CD4-positive, alpha-beta memory T cell (primary cell): ENCODE measurements at regions of chr12 and their contacts with region 1.

Region 1: DNA sequence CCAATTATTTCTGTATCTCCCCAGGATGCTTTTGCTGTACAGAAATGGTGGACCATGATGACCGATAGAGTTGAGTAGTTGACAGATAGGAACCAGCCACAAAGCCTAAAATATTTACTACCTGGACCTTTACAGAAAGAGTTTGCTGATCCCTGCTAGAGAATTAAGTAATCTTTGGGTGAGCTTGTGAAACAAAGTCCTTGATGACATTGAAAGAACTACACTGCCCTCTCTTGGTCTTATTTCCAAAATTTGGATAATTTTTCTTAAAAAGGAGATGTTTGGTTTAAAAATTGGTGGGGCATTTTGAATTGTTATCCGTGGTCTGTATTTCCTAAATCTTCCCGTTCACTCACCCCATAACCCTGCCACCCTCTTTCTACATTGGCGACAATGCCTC is 13.7 kb upstream of the TCTN1 start:
- DNase-seq: peak in 4 of 5 donors; percentile 51 to 56 (median 54)
- H3K4me3 ChIP-seq: no peak overlapping the region
- H3K4me3 Mint-ChIP-seq: no peak overlapping the region
- H3K27ac ChIP-seq: no peak overlapping the region
- H3K27ac Mint-ChIP-seq: peak overlapping the region in 3 of 7 donors; percentile 44 to 83 (median 55)
- H3K4me1 ChIP-seq: peaks cover 1% of the 10 kb centered on the region
- H3K4me1 Mint-ChIP-seq: peaks cover 4 to 11% (median 8%) of the 10 kb centered on the region in 4 donors
- H3K27me3 ChIP-seq: no peaks in the 10 kb centered on the region
- H3K27me3 Mint-ChIP-seq: no peaks in the 10 kb centered on the region

Region 2: GRCh38 chr12:110431957-110432587 is 168.2 kb before region 1 on chr12:
- CTCF ChIA-PET with region 1: interaction called, 15 read pairs
- POLR2A ChIA-PET with region 1: no interaction called
- intact Hi-C with region 1: no loop called
- DNase-seq: no peak
- H3K4me3 ChIP-seq: peak overlapping the region in 1 of 2 donors; percentile 43
- H3K4me3 Mint-ChIP-seq: no peak overlapping the region
- H3K27ac ChIP-seq: no peak overlapping the region
- H3K27ac Mint-ChIP-seq: peak overlapping the region in 4 of 7 donors; percentile 18 to 99 (median 55)
- H3K4me1 ChIP-seq: peaks cover 4% of the 10 kb centered on the region
- H3K4me1 Mint-ChIP-seq: peaks cover 2 to 12% (median 3%) of the 10 kb centered on the region in 4 donors
- H3K27me3 ChIP-seq: no peaks in the 10 kb centered on the region
- H3K27me3 Mint-ChIP-seq: no peaks in the 10 kb centered on the region

Region 3: GRCh38 chr12:110501752-110502738 is 98.2 kb before region 1 on chr12 and contains the starts of genes RAD9B and VPS29:
- CTCF ChIA-PET with region 1: interaction called, 16 read pairs
- POLR2A ChIA-PET with region 1: interaction called, 3 read pairs
- intact Hi-C with region 1: no loop called
- DNase-seq: peak; percentile 99 to 100 (median 99)
- H3K4me3 ChIP-seq: peak within 1 kb of the TSS; percentile 85 to 91
- H3K4me3 Mint-ChIP-seq: peak within 1 kb of the TSS; percentile 96 to 99 (median 98)
- H3K27ac ChIP-seq: peak within 1 kb of the TSS; percentile 94
- H3K27ac Mint-ChIP-seq: peak within 1 kb of the TSS; percentile 95 to 99 (median 97)
- H3K4me1 ChIP-seq: peaks cover 35% of the 10 kb centered on the region
- H3K4me1 Mint-ChIP-seq: peaks cover 20 to 44% (median 30%) of the 10 kb centered on the region in 4 donors
- H3K27me3 ChIP-seq: no peaks in the 10 kb centered on the region
- H3K27me3 Mint-ChIP-seq: no peaks in the 10 kb centered on the region
- total RNA-seq, gene RAD9B: 1.1 to 2.1 TPM
- total RNA-seq, gene VPS29: 117 to 121 TPM

Region 4: DNA sequence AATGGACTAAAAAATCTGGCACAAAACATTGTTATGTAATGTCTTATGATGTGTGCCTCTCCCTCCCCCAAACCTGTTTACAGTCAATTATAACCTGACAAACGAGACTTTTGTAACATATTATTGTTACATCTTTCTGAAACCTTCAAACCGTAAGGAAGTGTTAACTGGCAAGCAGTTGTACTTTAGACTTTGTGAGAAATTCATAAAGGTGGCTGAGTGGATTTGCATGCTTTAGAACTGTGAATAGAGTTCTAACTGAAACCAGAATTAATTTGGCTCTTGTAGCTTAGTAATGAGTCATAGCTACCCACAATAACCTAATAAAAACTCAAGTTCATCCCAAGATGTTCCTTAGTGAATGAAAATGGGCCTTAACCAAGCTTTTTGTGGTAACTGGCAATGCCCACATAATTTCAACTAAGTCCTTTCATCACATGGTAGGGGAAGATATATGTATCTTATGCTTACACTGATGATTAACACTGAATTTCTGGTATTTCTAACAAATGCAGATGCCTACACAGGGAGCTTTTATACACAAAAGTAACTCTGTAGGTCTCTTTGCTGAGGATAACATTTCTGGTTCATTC is 68.4 kb before region 1 on chr12:
- CTCF ChIA-PET with region 1: interaction called, 30 read pairs
- POLR2A ChIA-PET with region 1: no interaction called
- intact Hi-C with region 1: no loop called
- DNase-seq: no peak
- H3K4me3 ChIP-seq: no peak overlapping the region
- H3K4me3 Mint-ChIP-seq: no peak overlapping the region
- H3K27ac ChIP-seq: no peak overlapping the region
- H3K27ac Mint-ChIP-seq: peak overlapping the region in 3 of 7 donors; percentile 1 to 28 (median 24)
- H3K4me1 ChIP-seq: no peaks in the 10 kb centered on the region
- H3K4me1 Mint-ChIP-seq: peaks cover 1 to 6% (median 3%) of the 10 kb centered on the region in 4 donors
- H3K27me3 ChIP-seq: no peaks in the 10 kb centered on the region
- H3K27me3 Mint-ChIP-seq: no peaks in the 10 kb centered on the region

Region 5: GRCh38 chr12:110563702-110564640 is 36.3 kb before region 1 on chr12:
- CTCF ChIA-PET with region 1: interaction called, 102 read pairs
- POLR2A ChIA-PET with region 1: no interaction called
- intact Hi-C with region 1: no loop called
- DNase-seq: no peak
- H3K4me3 ChIP-seq: no peak overlapping the region
- H3K4me3 Mint-ChIP-seq: peak overlapping the region in 4 of 8 donors; percentile 7 to 40 (median 27)
- H3K27ac ChIP-seq: no peak overlapping the region
- H3K27ac Mint-ChIP-seq: peak overlapping the region; percentile 2 to 98 (median 88)
- H3K4me1 ChIP-seq: peaks cover 72% of the 10 kb centered on the region
- H3K4me1 Mint-ChIP-seq: peaks cover 46 to 80% (median 61%) of the 10 kb centered on the region in 4 donors
- H3K27me3 ChIP-seq: no peaks in the 10 kb centered on the region
- H3K27me3 Mint-ChIP-seq: no peaks in the 10 kb centered on the region

Region 6: DNA sequence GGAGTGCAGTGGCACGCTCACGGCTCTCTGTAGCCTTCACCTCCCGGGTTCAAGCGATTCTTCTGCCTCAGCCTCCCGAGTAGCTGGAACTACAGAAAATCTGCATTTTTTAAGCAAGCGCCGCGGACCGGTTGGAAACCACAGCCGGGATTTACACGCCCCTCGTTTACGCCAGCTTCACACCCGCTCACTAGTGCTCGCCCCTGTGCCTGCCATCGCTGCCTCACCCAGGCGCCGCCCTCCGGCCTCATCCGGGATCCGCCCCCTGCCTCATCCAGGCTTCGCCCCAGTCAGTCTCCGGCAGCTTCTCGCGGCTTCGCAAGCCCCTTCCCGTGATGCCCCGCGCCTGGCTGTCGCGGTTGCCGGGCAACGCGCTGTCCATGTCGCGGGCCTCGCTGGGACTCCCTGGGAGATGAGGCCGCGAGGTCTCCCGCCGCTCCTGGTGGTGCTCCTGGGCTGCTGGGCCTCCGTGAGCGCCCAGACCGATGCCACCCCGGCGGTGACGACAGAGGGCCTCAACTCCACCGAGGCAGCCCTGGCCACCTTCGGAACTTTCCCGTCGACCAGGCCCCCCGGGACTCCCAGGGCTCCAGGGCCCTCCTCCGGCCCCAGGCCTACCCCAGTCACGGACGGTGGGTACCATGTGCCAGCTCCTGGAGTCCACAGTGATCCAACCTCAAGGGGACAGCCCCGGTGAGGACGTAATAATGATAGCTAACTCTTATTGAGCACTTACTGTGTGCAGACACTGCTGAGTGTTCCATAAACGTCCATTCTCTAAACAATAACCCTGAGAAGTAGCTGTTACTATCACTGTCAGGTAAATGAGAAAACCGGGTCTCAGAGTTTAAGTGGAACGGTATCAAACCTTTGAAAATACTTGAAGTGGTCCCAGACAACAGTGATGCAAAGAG is 13.8 kb after region 1 on chr12 and contains the start of gene TCTN1:
- CTCF ChIA-PET with region 1: interaction called, 57 read pairs
- POLR2A ChIA-PET with region 1: interaction called, 3 read pairs
- intact Hi-C with region 1: no loop called
- DNase-seq: peak; percentile 93 to 96 (median 94)
- H3K4me3 ChIP-seq: peak within 1 kb of the TSS; percentile 53 to 86
- H3K4me3 Mint-ChIP-seq: peak within 1 kb of the TSS; percentile 86 to 90 (median 88)
- H3K27ac ChIP-seq: peak within 1 kb of the TSS; percentile 72
- H3K27ac Mint-ChIP-seq: peak within 1 kb of the TSS; percentile 65 to 94 (median 88)
- H3K4me1 ChIP-seq: peaks cover 8% of the 10 kb centered on the region
- H3K4me1 Mint-ChIP-seq: peaks cover 4 to 9% (median 6%) of the 10 kb centered on the region in 4 donors
- H3K27me3 ChIP-seq: no peaks in the 10 kb centered on the region
- H3K27me3 Mint-ChIP-seq: no peaks in the 10 kb centered on the region
- total RNA-seq, gene TCTN1: 5.8 to 7.7 TPM

Region 7: GRCh38 chr12:110826592-110827200 is 226.4 kb after region 1 on chr12:
- CTCF ChIA-PET with region 1: interaction called, 35 read pairs
- POLR2A ChIA-PET with region 1: no interaction called
- intact Hi-C with region 1: loop called (anchors 1 kb)
- DNase-seq: peak; percentile 73 to 83 (median 77)
- H3K4me3 ChIP-seq: peak overlapping the region in 1 of 2 donors; percentile 5
- H3K4me3 Mint-ChIP-seq: peak overlapping the region; percentile 36 to 76 (median 66)
- H3K27ac ChIP-seq: no peak overlapping the region
- H3K27ac Mint-ChIP-seq: peak overlapping the region in 3 of 7 donors; percentile 9 to 89 (median 60)
- H3K4me1 ChIP-seq: peaks cover 6% of the 10 kb centered on the region
- H3K4me1 Mint-ChIP-seq: peaks cover 3 to 7% (median 7%) of the 10 kb centered on the region in 4 donors
- H3K27me3 ChIP-seq: no peaks in the 10 kb centered on the region
- H3K27me3 Mint-ChIP-seq: peaks cover 1 to 4% of the 10 kb centered on the region in 2 donors